Gastrocnemius medialis (tissue), 4 donors: ENCODE measurements at regions of chr1 and their contacts with region 1.

Region 1: DNA sequence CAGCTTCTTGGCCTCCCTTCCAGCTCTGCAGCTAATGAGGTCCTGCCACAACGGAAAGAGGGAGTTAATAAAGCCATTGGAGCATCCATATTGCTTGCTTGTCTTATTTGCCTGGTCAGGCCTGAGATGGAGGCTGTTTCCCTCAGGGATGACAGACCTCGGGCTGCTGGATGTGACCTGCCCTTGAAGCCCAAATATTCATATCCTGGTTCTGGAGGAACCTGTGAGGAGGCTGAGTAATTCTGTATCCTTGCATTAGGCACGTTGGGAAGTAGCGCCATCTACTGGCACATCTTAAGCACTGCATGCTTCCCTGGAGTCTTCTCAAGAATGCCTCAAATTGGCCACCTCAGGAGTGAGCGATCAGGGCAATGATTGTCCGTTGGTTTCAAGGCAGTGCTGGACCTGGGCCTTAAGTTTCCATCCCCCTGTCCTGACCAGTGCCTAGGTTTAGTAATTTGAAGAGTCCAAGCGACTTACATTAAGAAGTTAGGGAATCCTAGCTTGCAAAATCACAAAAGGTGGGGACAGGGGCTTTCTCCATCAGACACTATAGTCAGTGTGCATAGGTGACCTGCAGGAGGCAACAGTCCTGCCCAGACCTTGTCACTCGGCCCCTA is 13.8 kb upstream of the NASP start:
- DNase-seq: peak; percentile 30 to 69
- ATAC-seq: peak; percentile 93 to 94
- H3K4me3 ChIP-seq: no peak overlapping the region
- H3K27ac ChIP-seq: no peak overlapping the region
- H3K4me1 ChIP-seq: peaks cover 0 to 5% of the 10 kb centered on the region in 2 donors
- H3K27me3 ChIP-seq: no peaks in the 10 kb centered on the region
- CTCF ChIP-seq: peak; percentile 91 to 99 (median 93)
- POLR2A ChIP-seq: no peak

Region 2: DNA sequence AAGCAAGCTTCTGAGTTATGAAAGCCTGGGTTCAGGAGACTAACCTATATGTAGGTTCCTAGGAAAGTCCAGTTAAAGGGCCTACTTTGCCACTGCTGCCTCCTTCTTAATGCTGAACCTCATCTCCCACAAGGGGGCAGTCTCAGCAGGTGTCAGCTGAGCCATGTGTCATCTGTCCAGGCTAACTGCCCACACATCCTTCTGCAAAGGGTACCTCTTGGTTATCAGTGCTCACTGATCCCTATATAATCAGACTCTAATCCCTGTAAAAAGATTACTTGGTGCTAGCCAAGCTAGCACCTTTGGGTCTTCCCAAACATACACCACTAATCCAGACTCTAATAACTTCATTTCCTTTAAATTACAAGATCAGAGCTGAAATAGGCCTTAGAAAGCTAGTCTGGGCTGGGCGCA is 57.4 kb before region 1 on chr1:
- in situ Hi-C with region 1: loop called (anchors 5 to 10 kb)
- intact Hi-C with region 1: loop called (anchors 1 kb)
- DNase-seq: peak in 1 of 2 donors; percentile 65
- ATAC-seq: peak; percentile 77 to 89
- H3K4me3 ChIP-seq: no peak overlapping the region
- H3K27ac ChIP-seq: peak overlapping the region in 1 of 4 donors; percentile 24
- H3K4me1 ChIP-seq: peaks cover 0 to 3% of the 10 kb centered on the region in 2 donors
- H3K27me3 ChIP-seq: no peaks in the 10 kb centered on the region
- CTCF ChIP-seq: peak; percentile 53 to 70 (median 63)
- POLR2A ChIP-seq: no peak

Region 3: DNA sequence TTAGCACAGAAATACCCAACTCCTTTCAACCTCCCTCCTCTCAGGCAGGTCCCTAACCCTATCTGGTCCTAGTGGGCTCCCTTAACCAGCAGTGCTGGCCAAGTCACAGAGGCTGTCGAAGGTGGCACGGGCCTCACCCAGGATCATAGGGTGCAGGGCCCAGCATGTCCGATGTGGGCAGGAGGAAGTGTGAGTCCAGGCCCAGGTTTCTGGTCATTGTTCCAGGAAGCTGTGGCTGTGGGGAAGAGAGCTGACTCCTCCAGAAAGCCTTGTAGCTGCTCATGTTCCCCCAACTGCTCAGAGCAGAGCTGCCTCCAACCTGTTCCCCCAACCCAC is 51.4 kb after region 1 on chr1:
- in situ Hi-C with region 1: no loop called
- intact Hi-C with region 1: no loop called
- DNase-seq: no peak
- ATAC-seq: no peak
- H3K4me3 ChIP-seq: no peak overlapping the region
- H3K27ac ChIP-seq: peak overlapping the region; percentile 63 to 79 (median 70)
- H3K4me1 ChIP-seq: peaks cover 0 to 23% of the 10 kb centered on the region in 2 donors
- H3K27me3 ChIP-seq: no peaks in the 10 kb centered on the region
- CTCF ChIP-seq: no peak
- POLR2A ChIP-seq: no peak